ENCODE measurements at regions of chr4 and their contacts with region 1.

Region 1: GRCh38 chr4:153232768-153233167 is 28.5 kb downstream of the TRIM2 start:
- DNase-seq: peak; percentile 38
- ATAC-seq: 0 out of 2 replicates have a peak, but pooled peaks have one; percentile 5
- H3K4me3 ChIP-seq: no peak overlapping the region
- H3K27ac ChIP-seq: peak overlapping the region; percentile 78
- H3K4me1 ChIP-seq: peaks cover 35% of the 10 kb centered on the region
- H3K27me3 ChIP-seq: no peaks in the 10 kb centered on the region
- CTCF ChIP-seq: peak; percentile 36; the same call in 1 of the 2 replicates

Region 2: DNA sequence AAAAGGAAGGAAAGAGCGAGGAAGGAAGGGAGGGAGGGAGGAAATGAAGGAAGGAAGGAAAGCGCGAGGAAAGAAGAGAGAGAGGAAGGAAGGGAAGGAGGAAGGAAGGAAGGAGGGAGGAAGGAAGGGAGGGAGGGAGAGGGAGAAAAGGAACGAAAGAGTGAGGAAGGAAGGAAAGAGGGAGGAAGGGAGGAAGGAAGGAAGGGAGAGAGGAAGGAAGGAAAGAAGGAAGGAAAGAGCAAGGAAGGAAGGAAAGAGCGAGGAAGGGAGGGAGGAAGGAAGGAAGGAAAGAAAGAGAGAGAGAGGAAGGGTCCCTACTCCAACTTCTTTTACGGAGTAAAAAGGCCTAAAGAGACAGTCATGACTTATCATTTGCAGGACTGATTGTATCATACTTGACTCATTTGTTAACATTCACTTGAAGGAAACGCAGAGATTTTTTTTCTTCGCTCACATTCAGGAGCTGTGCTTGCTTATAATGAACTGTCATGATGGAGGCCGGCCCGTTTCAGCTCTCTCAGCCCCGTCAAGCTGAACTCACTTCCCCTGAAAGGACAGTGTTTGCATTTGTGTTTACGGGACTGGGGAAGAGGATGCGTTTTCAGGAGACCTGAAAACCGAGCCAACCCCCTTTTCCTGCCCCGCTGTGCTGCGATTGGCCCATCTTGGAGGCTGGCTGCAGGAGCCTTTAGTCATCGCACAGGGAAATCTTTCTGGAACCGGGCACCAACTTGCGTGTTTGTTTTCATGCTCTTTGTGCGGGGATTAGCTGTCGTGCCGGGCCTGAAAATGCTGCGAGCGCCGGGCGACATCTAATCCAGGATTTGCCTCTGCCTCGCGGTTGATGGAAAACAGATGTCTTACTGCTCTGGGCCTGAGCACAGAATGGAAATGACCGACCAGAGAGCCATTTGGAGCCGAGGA is 10.7 kb before region 1 on chr4:
- CTCF ChIA-PET with region 1: no interaction called
- POLR2A ChIA-PET with region 1: no interaction called
- intact Hi-C with region 1: loop called (anchors 1 kb)
- DNase-seq: peak; percentile 79
- ATAC-seq: peak; percentile 79
- H3K4me3 ChIP-seq: peak overlapping the region; percentile 70
- H3K27ac ChIP-seq: peak overlapping the region; percentile 80
- H3K4me1 ChIP-seq: peaks cover 41% of the 10 kb centered on the region
- H3K27me3 ChIP-seq: no peaks in the 10 kb centered on the region
- CTCF ChIP-seq: no peak

Region 3: DNA sequence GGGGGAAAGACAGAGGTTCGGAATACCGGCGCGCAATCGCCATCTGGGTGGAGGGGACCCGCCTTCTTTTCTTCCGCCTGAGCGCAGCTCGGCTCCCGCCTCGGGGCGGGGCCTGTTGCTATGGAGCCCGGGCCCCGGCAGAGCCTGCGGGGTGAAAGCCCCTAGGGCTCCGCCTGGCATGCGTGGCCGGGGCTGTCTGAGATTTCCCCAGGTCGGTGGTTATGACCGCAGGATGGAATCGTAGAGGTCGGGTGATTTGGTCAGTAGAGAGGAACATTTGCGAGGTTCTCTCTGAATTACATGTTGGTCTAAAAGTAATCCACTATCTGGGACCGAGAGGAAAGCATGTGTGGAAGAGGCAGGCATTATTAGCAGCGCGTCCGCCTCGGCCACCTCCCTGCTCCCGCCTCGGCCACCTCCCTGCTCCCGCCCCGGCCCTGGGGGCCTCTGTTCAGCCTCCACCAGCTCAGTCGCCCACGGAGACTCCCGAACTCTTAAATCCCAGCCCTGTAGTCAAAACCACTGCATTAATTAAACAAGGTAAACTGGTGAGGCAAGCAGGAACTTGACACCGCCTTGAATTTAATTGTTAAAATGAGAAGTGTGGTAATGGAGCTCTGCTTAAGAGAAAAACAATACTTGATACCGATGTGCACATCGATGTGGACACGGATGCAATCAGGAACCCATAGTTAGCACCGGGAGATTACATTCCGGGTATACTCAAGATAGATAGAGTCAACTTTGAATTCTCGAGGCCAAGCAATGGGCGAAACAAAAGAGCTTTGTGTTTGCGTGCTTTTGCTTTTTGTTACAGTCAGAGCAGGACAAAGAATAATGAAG is 16.7 kb after region 1 on chr4:
- CTCF ChIA-PET with region 1: no interaction called
- POLR2A ChIA-PET with region 1: no interaction called
- intact Hi-C with region 1: loop called (anchors 2 kb)
- DNase-seq: peak; percentile 73
- ATAC-seq: peak; percentile 88
- H3K4me3 ChIP-seq: peak overlapping the region; percentile 72
- H3K27ac ChIP-seq: peak overlapping the region; percentile 37
- H3K4me1 ChIP-seq: peaks cover 34% of the 10 kb centered on the region
- H3K27me3 ChIP-seq: no peaks in the 10 kb centered on the region
- CTCF ChIP-seq: no peak

Region 4: GRCh38 chr4:153276971-153277370 is 44.2 kb after region 1 on chr4:
- CTCF ChIA-PET with region 1: no interaction called
- POLR2A ChIA-PET with region 1: no interaction called
- intact Hi-C with region 1: loop called (anchors 1 kb)
- DNase-seq: no peak
- ATAC-seq: no peak
- H3K4me3 ChIP-seq: no peak overlapping the region
- H3K27ac ChIP-seq: no peak overlapping the region
- H3K4me1 ChIP-seq: no peaks in the 10 kb centered on the region
- H3K27me3 ChIP-seq: no peaks in the 10 kb centered on the region
- CTCF ChIP-seq: no peak

Measured in PC-3 (cell line).